Naive thymus-derived CD4-positive, alpha-beta T cell (primary cell): ENCODE measurements at regions of chr9 and their contacts with region 1.

Region 1: GRCh38 chr9:33290247-33291030 is at the start of gene NFX1:
- DNase-seq: peak; percentile 94 to 100 (median 99)
- ATAC-seq: peak; percentile 89
- H3K4me3 ChIP-seq: peak within 1 kb of the TSS; percentile 76
- H3K4me3 Mint-ChIP-seq: peak within 1 kb of the TSS; percentile 83 to 99 (median 94)
- H3K27ac ChIP-seq: peak within 1 kb of the TSS; percentile 93
- H3K27ac Mint-ChIP-seq: peak within 1 kb of the TSS; percentile 96 to 100 (median 99)
- H3K4me1 ChIP-seq: peaks cover 11 to 49% of the 10 kb centered on the region in 2 donors
- H3K4me1 Mint-ChIP-seq: peaks cover 36 to 72% (median 58%) of the 10 kb centered on the region in 7 donors
- H3K27me3 ChIP-seq: no peaks in the 10 kb centered on the region
- H3K27me3 Mint-ChIP-seq: peaks cover 0 to 4% (median 0%) of the 10 kb centered on the region in 5 donors
- total RNA-seq, gene NFX1: 39.8 to 65.4 (median 43.6) TPM

Region 2: GRCh38 chr9:33159760-33160127 is 130.7 kb before region 1 on chr9:
- CTCF ChIA-PET with region 1: no interaction called
- POLR2A ChIA-PET with region 1: no interaction called
- intact Hi-C with region 1: loop called in 1 of 2 experiments (anchors 2 kb)
- DNase-seq: peak in 8 of 9 donors; percentile 59 to 74 (median 66)
- ATAC-seq: peak; percentile 77
- H3K4me3 ChIP-seq: peak overlapping the region; percentile 2
- H3K4me3 Mint-ChIP-seq: peak overlapping the region; percentile 64 to 86 (median 78)
- H3K27ac ChIP-seq: peak overlapping the region; percentile 91
- H3K27ac Mint-ChIP-seq: peak overlapping the region; percentile 88 to 99 (median 97)
- H3K4me1 ChIP-seq: peaks cover 80 to 93% of the 10 kb centered on the region in 2 donors
- H3K4me1 Mint-ChIP-seq: peaks cover 74 to 99% (median 94%) of the 10 kb centered on the region in 7 donors
- H3K27me3 ChIP-seq: no peaks in the 10 kb centered on the region
- H3K27me3 Mint-ChIP-seq: no peaks in the 10 kb centered on the region

Region 3: GRCh38 chr9:33330005-33330404 is 39.6 kb after region 1 on chr9:
- CTCF ChIA-PET with region 1: interaction called, 4 read pairs
- POLR2A ChIA-PET with region 1: no interaction called
- intact Hi-C with region 1: loop called in 1 of 2 experiments (anchors 5 kb)
- DNase-seq: no peak
- ATAC-seq: no peak
- H3K4me3 ChIP-seq: no peak overlapping the region
- H3K4me3 Mint-ChIP-seq: no peak overlapping the region
- H3K27ac ChIP-seq: no peak overlapping the region
- H3K27ac Mint-ChIP-seq: no peak overlapping the region
- H3K4me1 ChIP-seq: no peaks in the 10 kb centered on the region
- H3K4me1 Mint-ChIP-seq: no peaks in the 10 kb centered on the region
- H3K27me3 ChIP-seq: no peaks in the 10 kb centered on the region
- H3K27me3 Mint-ChIP-seq: no peaks in the 10 kb centered on the region

Region 4: DNA sequence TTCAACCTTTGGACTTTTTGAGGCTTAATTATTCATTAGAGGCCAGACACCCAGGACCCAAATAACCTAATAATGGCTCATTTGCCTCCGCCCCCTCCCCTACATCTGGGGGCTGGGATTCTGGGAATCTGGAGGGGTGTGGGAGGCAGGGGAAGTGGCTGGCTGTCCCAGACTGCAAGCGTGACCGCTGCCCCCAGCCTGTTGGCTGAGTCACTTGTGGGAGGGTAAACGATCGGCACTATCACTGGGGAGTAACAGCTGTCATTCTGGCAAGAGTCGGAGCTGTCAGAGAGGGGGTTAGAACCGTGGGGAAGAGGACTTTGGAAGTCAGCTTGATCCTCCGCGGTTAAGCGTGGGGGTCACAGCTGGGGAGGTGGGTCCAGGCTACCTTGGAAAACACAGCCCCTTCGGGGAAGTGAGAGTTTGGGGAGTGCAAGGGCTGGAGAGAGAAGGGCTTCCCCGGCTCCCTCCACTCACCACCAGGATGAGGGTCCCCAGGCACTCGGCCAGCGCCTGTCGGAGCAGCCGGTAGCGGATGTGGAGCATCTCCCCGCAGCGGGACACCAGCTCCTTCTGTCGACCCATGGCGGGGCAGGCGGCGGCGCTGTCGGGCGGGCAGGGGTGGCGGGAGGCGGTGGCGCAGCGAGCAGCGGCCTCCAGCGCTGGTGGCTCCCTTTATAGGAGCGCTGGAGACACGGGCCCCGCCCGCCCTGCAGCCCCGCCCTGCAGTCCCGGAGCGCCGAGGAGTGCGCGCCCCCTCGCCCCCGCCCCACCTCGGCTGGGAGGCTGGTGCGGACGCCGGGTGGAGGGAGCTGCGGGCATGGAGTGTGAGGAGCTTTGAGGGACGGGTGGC is 156.7 kb after region 1 on chr9 and contains the start of gene AQP3:
- CTCF ChIA-PET with region 1: interaction called, 3 read pairs
- POLR2A ChIA-PET with region 1: interaction called, 14 read pairs
- intact Hi-C with region 1: loop called (anchors 1 kb)
- DNase-seq: peak; percentile 59 to 77 (median 72)
- ATAC-seq: peak; percentile 79
- H3K4me3 ChIP-seq: peak within 1 kb of the TSS; percentile 86
- H3K4me3 Mint-ChIP-seq: peak within 1 kb of the TSS; percentile 89 to 98 (median 94)
- H3K27ac ChIP-seq: peak within 1 kb of the TSS; percentile 85
- H3K27ac Mint-ChIP-seq: peak within 1 kb of the TSS; percentile 81 to 97 (median 96)
- H3K4me1 ChIP-seq: peaks cover 27 to 36% of the 10 kb centered on the region in 2 donors
- H3K4me1 Mint-ChIP-seq: peaks cover 23 to 60% (median 45%) of the 10 kb centered on the region in 7 donors
- H3K27me3 ChIP-seq: no peaks in the 10 kb centered on the region
- H3K27me3 Mint-ChIP-seq: no peaks in the 10 kb centered on the region
- total RNA-seq, gene AQP3: 53.3 to 173 (median 110) TPM

Region 5: GRCh38 chr9:33623658-33624586 is 333.5 kb after region 1 on chr9:
- CTCF ChIA-PET with region 1: interaction called, 3 read pairs
- POLR2A ChIA-PET with region 1: no interaction called
- intact Hi-C with region 1: loop called in 1 of 2 experiments (anchors 5 kb)
- DNase-seq: peak; percentile 42 to 79 (median 72)
- ATAC-seq: peak; percentile 97
- H3K4me3 ChIP-seq: no peak overlapping the region
- H3K4me3 Mint-ChIP-seq: no peak overlapping the region
- H3K27ac ChIP-seq: no peak overlapping the region
- H3K27ac Mint-ChIP-seq: no peak overlapping the region
- H3K4me1 ChIP-seq: no peaks in the 10 kb centered on the region
- H3K4me1 Mint-ChIP-seq: peaks cover 3 to 7% (median 4%) of the 10 kb centered on the region in 7 donors
- H3K27me3 ChIP-seq: peaks cover 0 to 3% of the 10 kb centered on the region in 2 donors
- H3K27me3 Mint-ChIP-seq: peaks cover 22 to 37% (median 26%) of the 10 kb centered on the region in 5 donors

Region 6: GRCh38 chr9:34458013-34458958 is 1167.8 kb after region 1 on chr9 and contains the starts of genes DNAI1 and FAM219A:
- CTCF ChIA-PET with region 1: no interaction called
- POLR2A ChIA-PET with region 1: no interaction called
- intact Hi-C with region 1: loop called in 1 of 2 experiments (anchors 2 kb)
- DNase-seq: peak; percentile 97 to 100 (median 99)
- ATAC-seq: peak; percentile 98
- H3K4me3 ChIP-seq: peak within 1 kb of the TSS; percentile 68
- H3K4me3 Mint-ChIP-seq: peak within 1 kb of the TSS; percentile 86 to 93 (median 92)
- H3K27ac ChIP-seq: peak within 1 kb of the TSS; percentile 41
- H3K27ac Mint-ChIP-seq: peak within 1 kb of the TSS; percentile 57 to 93 (median 82)
- H3K4me1 ChIP-seq: peaks cover 13 to 16% of the 10 kb centered on the region in 2 donors
- H3K4me1 Mint-ChIP-seq: peaks cover 28 to 46% (median 38%) of the 10 kb centered on the region in 7 donors
- H3K27me3 ChIP-seq: no peaks in the 10 kb centered on the region
- H3K27me3 Mint-ChIP-seq: peaks cover 0 to 23% (median 6%) of the 10 kb centered on the region in 5 donors
- total RNA-seq, gene DNAI1: not detected
- total RNA-seq, gene FAM219A: 12.3 to 14.6 (median 13.4) TPM